Heart right ventricle (tissue), 16 donors: ENCODE measurements at regions of chr15 and their contacts with region 1.

Region 1: DNA sequence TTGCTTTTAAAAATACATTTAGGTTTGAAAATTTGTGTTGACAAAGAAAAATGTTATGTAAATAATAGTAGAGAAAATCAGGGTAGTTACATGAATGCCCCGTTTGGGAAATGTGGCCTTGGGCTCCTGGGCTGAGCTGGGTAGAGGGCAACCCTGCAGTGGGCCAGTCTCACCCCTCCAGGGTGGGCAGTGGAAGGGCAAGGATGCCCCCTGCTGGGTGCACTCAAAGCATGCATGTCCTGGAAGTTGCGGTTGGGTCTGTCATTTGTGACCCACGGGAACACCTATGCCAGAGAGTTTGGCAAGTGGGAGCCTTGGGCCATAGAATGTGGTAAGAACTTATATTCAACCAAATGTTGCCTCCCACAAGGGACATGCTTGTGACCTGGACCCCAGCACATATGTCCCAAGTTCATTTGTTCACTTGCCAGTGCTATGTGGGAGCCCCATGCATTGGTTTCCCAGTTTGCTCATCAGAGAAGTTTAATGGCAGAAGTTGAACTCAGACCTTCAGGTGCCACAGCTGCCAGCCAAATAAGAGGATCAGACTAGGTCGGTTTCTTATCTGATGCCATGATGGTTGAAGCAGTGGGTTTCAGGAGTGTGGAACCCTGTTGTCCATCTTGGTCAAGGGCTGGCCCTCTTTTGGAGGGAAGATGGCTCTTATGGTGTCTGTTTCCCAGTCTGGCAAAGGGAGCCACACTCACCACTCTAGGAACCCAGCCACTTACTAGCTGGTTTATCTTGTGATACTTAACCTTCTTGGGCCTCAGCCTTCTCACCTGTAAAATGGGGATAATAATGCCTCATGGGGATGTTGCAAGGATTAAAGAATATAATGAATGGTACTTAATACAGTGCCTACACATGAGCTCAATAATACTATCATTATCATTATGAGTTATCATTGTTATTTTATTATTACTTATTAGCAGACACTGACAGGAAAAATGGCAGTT is 2.5 kb upstream of the PLCB2 start:
- DNase-seq: peak; percentile 63 to 68
- ATAC-seq: peak; percentile 40 to 82 (median 74)
- H3K4me3 ChIP-seq: no peak overlapping the region
- H3K27ac ChIP-seq: no peak overlapping the region
- H3K4me1 ChIP-seq: peaks cover 0 to 45% (median 7%) of the 10 kb centered on the region in 9 donors
- H3K27me3 ChIP-seq: peaks cover 0 to 3% (median 0%) of the 10 kb centered on the region in 7 donors
- CTCF ChIP-seq: peak; percentile 47 to 86 (median 80)

Region 2: GRCh38 chr15:40282144-40282868 is 28.0 kb before region 1 on chr15:
- intact Hi-C with region 1: loop called in 8 of 10 experiments (anchors 1 to 5 kb)
- DNase-seq: peak in 1 of 2 donors; percentile 55
- ATAC-seq: peak in 3 of 8 donors; percentile 23 to 32 (median 25)
- H3K4me3 ChIP-seq: peak overlapping the region; percentile 37 to 62 (median 50)
- H3K27ac ChIP-seq: peak overlapping the region in 1 of 10 donors; percentile 1
- H3K4me1 ChIP-seq: peaks cover 20 to 63% (median 44%) of the 10 kb centered on the region in 9 donors
- H3K27me3 ChIP-seq: peaks cover 15 to 69% (median 67%) of the 10 kb centered on the region in 7 donors
- CTCF ChIP-seq: peak in 6 of 9 donors; percentile 26 to 59 (median 47)